Activated B cell treated with CpG ODN at 0.5 μM for 24 hours (primary cell): ENCODE measurements at regions of chr1 and their contacts with region 1.

Region 1: GRCh38 chr1:160607011-160607671 is 27.8 kb upstream of the CD84 start:
- DNase-seq: no peak
- ATAC-seq: peak; percentile 94
- H3K4me3 Mint-ChIP-seq: peak overlapping the region; percentile 42
- H3K27ac Mint-ChIP-seq: peak overlapping the region; percentile 84
- H3K4me1 Mint-ChIP-seq: peaks cover 33% of the 10 kb centered on the region
- H3K27me3 Mint-ChIP-seq: no peaks in the 10 kb centered on the region
- CTCF ChIP-seq: no peak

Region 2: GRCh38 chr1:160193091-160193819 is 413.9 kb before region 1 on chr1:
- CTCF ChIA-PET with region 1: no interaction called
- POLR2A ChIA-PET with region 1: no interaction called
- intact Hi-C with region 1: loop called (anchors 10 kb)
- DNase-seq: peak; percentile 72
- ATAC-seq: peak; percentile 95
- H3K4me3 Mint-ChIP-seq: no peak overlapping the region
- H3K27ac Mint-ChIP-seq: no peak overlapping the region
- H3K4me1 Mint-ChIP-seq: peaks cover 3% of the 10 kb centered on the region
- H3K27me3 Mint-ChIP-seq: no peaks in the 10 kb centered on the region
- CTCF ChIP-seq: peak; percentile 43

Region 3: GRCh38 chr1:160354388-160354985 is 252.7 kb before region 1 on chr1:
- CTCF ChIA-PET with region 1: no interaction called
- POLR2A ChIA-PET with region 1: no interaction called
- intact Hi-C with region 1: loop called (anchors 1 kb)
- DNase-seq: no peak
- ATAC-seq: peak; percentile 54
- H3K4me3 Mint-ChIP-seq: no peak overlapping the region
- H3K27ac Mint-ChIP-seq: no peak overlapping the region
- H3K4me1 Mint-ChIP-seq: no peaks in the 10 kb centered on the region
- H3K27me3 Mint-ChIP-seq: no peaks in the 10 kb centered on the region
- CTCF ChIP-seq: no peak

Region 4: DNA sequence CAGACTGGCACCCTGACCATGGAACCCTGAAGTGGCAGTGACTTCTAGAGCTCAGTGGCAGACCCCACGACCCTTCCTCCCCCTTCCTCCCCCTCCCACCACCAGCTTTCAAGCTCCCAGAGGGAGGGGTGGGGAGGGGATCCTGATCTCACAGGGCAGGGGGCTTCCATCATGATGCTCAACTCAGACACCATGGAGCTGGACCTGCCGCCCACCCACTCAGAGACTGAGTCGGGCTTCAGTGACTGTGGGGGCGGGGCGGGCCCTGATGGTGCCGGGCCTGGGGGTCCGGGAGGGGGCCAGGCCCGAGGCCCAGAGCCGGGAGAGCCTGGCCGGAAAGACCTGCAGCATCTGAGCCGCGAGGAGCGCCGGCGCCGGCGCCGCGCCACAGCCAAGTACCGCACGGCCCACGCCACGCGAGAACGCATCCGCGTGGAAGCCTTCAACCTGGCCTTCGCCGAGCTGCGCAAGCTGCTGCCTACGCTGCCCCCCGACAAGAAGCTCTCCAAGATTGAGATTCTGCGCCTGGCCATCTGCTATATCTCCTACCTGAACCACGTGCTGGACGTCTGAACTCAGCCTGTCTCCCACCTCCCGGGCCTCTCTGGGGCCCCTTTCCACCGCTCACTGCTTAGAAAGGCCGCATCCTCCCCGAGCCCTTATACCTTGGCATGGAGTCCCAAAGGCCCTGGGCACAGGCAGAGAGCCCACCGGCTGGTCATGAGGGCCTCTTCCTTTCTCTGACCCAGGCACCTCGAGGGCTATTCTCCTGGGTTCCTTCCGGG is 236.4 kb before region 1 on chr1:
- CTCF ChIA-PET with region 1: no interaction called
- POLR2A ChIA-PET with region 1: no interaction called
- intact Hi-C with region 1: no loop called
- DNase-seq: no peak
- ATAC-seq: no peak
- H3K4me3 Mint-ChIP-seq: no peak overlapping the region
- H3K27ac Mint-ChIP-seq: no peak overlapping the region
- H3K4me1 Mint-ChIP-seq: peaks cover 14% of the 10 kb centered on the region
- H3K27me3 Mint-ChIP-seq: no peaks in the 10 kb centered on the region
- CTCF ChIP-seq: no peak

Region 5: DNA sequence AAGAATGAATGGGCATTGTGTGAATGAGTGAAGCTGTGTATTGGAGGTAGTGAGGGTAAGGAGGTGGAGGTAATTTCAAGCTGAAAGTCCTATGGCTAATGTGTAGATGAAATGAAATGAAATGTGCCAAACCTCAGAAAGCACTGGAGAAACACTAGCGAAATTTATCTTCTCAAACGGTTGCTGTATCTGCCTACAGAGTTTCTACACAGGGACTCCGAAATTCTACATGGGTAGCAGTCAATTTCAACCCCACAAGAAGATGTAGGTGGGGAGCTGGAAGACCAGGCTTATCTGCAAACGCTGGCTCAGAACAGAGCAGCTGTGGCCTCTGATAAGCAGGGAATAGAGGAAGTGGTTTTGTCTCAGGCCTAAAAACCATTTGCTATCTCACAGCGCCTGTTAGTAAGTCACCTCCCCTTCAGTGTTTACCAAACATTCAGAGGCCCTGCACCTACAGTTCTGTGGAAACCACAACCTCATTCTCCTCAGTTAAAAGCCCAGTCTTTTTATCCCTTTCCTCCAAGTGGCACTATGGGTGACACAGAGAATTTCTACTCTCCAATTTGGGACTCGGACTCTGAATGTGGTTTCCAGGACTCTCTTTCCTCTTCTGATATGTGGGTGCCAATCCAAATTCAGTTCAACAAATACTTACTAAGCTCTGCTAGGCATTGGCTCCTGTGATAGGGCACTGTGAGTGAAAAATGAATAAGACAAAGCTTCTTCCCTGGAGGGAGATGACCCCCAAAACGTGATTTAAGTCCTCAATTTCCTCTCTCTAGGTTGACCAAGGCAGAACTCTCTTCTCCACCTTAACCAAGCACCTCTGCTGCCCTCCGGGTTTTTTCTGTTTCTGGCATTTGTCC is 66.9 kb before region 1 on chr1:
- CTCF ChIA-PET with region 1: interaction called, 52 read pairs
- POLR2A ChIA-PET with region 1: interaction called, 5 read pairs
- intact Hi-C with region 1: loop called (anchors 1 kb)
- DNase-seq: no peak
- ATAC-seq: peak; percentile 95
- H3K4me3 Mint-ChIP-seq: peak overlapping the region; percentile 56
- H3K27ac Mint-ChIP-seq: peak overlapping the region; percentile 96
- H3K4me1 Mint-ChIP-seq: peaks cover 58% of the 10 kb centered on the region
- H3K27me3 Mint-ChIP-seq: no peaks in the 10 kb centered on the region
- CTCF ChIP-seq: no peak

Region 6: DNA sequence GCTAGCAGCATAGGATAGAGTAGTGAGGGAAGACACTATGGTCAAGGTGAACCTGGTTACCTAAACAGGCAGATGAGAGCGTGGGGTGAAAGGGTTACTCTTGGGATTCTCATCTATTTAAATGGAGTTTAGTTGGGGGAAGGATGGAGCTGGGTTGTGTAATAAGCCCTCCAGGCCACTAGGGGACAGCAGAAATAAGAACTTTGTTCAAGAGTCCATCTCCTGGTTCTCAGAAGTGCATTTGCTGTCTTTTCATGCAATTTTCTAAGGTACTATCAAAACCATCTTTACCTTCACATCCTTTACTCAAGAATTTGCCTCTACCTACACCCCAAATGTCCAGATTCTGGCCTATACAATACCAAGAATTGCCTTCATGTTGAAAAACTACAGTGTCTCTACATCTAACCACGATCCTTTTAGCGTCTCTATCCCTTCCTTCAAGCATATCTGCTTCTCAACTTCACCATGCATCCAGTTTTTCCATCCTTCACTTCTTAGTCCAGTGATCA is 11.7 kb after region 1 on chr1:
- CTCF ChIA-PET with region 1: interaction called, 11 read pairs
- POLR2A ChIA-PET with region 1: no interaction called
- intact Hi-C with region 1: no loop called
- DNase-seq: no peak
- ATAC-seq: no peak
- H3K4me3 Mint-ChIP-seq: no peak overlapping the region
- H3K27ac Mint-ChIP-seq: peak overlapping the region; percentile 5
- H3K4me1 Mint-ChIP-seq: peaks cover 58% of the 10 kb centered on the region
- H3K27me3 Mint-ChIP-seq: no peaks in the 10 kb centered on the region
- CTCF ChIP-seq: no peak

Region 7: GRCh38 chr1:160806109-160806665 is 199.0 kb after region 1 on chr1:
- CTCF ChIA-PET with region 1: no interaction called
- POLR2A ChIA-PET with region 1: no interaction called
- intact Hi-C with region 1: no loop called
- DNase-seq: no peak
- ATAC-seq: no peak
- H3K4me3 Mint-ChIP-seq: no peak overlapping the region
- H3K27ac Mint-ChIP-seq: no peak overlapping the region
- H3K4me1 Mint-ChIP-seq: peaks cover 66% of the 10 kb centered on the region
- H3K27me3 Mint-ChIP-seq: no peaks in the 10 kb centered on the region
- CTCF ChIP-seq: no peak